Natural killer cell (primary cell): ENCODE measurements at regions of chrX and their contacts with region 1.

Region 1: DNA sequence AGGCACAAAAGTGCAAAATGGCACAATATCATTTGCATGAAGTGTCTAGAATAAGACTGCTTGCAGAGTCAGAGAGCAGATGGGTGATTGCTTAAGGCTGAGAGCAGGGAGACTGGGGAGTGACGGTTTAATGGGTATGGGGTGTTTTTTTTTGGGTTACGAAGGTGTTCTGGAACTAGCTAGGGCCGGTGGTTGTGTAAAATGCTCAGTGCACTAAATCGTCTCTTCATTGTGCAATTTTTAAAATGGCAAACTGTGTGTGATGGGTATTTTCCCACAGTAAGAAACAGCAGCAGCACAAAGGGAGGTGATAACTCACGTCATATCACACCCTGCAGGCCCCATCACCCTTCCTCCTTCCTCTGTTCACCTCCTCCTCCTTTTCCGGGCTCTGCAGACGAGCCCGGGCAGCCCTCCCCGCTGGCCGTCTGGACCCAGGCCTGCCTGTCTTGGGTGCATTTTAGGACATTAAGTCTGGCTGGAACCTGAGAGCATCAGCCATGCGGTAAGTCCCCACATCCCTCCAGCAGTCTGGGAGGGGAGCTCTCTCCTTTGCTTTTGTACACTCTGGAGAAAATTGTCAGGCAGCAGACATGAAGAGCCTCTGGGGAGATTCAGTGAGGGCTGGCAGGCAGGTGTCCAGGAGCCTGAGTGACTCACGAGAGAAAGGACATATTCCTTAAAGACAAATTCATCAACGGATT is 42.7 kb downstream of the ASMT start:
- DNase-seq: peak; percentile 73 to 90
- ATAC-seq: peak; percentile 67 to 97 (median 67)
- H3K4me3 ChIP-seq: peak overlapping the region; percentile 55
- H3K4me3 Mint-ChIP-seq: peak overlapping the region; percentile 82
- H3K27ac ChIP-seq: peak overlapping the region; percentile 94
- H3K27ac Mint-ChIP-seq: peak overlapping the region; percentile 97 to 98
- H3K4me1 ChIP-seq: peaks cover 52% of the 10 kb centered on the region
- H3K4me1 Mint-ChIP-seq: peaks cover 34 to 43% of the 10 kb centered on the region in 2 donors
- H3K27me3 ChIP-seq: no peaks in the 10 kb centered on the region
- H3K27me3 Mint-ChIP-seq: no peaks in the 10 kb centered on the region
- CTCF ChIP-seq: no peak

Region 2: GRCh38 chrX:1391707-1392375 is 265.7 kb before region 1 on chrX and contains the start of gene SLC25A6:
- intact Hi-C with region 1: loop called (anchors 5 kb)
- DNase-seq: peak; percentile 99 to 100
- ATAC-seq: peak; percentile 93 to 98 (median 93)
- H3K4me3 ChIP-seq: peak within 1 kb of the TSS; percentile 99
- H3K4me3 Mint-ChIP-seq: peak within 1 kb of the TSS; percentile 92
- H3K27ac ChIP-seq: peak within 1 kb of the TSS; percentile 95
- H3K27ac Mint-ChIP-seq: peak within 1 kb of the TSS; percentile 85 to 94
- H3K4me1 ChIP-seq: peaks cover 24% of the 10 kb centered on the region
- H3K4me1 Mint-ChIP-seq: peaks cover 37 to 61% of the 10 kb centered on the region in 2 donors
- H3K27me3 ChIP-seq: no peaks in the 10 kb centered on the region
- H3K27me3 Mint-ChIP-seq: no peaks in the 10 kb centered on the region
- CTCF ChIP-seq: no peak
- total RNA-seq, gene SLC25A6: 157 to 197 (median 178) TPM

Region 3: DNA sequence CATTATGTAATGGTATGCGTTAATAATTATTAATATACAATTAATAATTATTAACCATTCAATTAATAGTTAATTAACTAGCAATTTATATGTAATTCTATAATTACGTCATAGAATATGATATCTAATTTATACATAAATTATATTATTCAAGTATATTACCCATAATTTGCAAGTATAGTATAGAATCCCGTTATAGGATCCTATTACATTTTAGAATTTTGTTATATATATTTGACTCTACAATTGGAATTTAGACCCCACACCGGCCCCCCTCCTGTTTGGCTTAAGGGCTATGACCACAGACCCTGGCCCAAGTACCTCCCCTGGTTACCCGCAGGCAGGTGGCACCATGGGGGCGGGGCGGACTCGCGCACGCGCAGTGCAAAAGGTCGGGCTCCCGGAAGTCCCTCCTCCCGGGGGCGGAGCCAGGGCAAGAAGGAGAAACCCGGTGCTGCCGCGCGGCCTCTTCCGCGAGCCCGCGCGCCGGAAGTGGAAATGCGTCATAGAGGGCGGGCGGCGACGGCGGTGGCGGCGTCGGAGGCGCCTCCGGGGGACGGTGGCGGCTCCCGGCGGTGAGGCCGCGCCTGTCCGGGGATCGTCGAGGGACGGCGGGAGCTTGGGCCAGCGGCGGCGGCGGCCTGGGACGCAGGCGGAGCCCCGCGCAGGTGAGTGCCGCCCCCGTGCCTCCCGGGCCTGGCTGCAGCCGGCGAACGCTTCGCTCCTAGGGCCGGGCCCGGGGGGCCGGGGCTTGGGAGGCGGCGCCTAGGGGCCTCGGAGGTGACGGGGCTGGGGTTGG is 66.2 kb before region 1 on chrX and contains the start of gene AKAP17A:
- intact Hi-C with region 1: loop called (anchors 5 kb)
- DNase-seq: peak; percentile 97 to 99
- ATAC-seq: peak; percentile 93 to 94 (median 94)
- H3K4me3 ChIP-seq: peak within 1 kb of the TSS; percentile 91
- H3K4me3 Mint-ChIP-seq: peak within 1 kb of the TSS; percentile 92
- H3K27ac ChIP-seq: peak within 1 kb of the TSS; percentile 85
- H3K27ac Mint-ChIP-seq: peak within 1 kb of the TSS; percentile 87 to 93
- H3K4me1 ChIP-seq: peaks cover 29% of the 10 kb centered on the region
- H3K4me1 Mint-ChIP-seq: peaks cover 20 to 35% of the 10 kb centered on the region in 2 donors
- H3K27me3 ChIP-seq: no peaks in the 10 kb centered on the region
- H3K27me3 Mint-ChIP-seq: no peaks in the 10 kb centered on the region
- CTCF ChIP-seq: peak; percentile 9
- total RNA-seq, gene AKAP17A: 120 to 141 (median 121) TPM

Region 4: GRCh38 chrX:2500267-2501075 is 843.0 kb after region 1 on chrX and contains the starts of genes DHRSX and ZBED1:
- intact Hi-C with region 1: loop called (anchors 5 kb)
- DNase-seq: peak; percentile 65 to 66
- ATAC-seq: peak; percentile 78 to 86 (median 84)
- H3K4me3 ChIP-seq: peak within 1 kb of the TSS; percentile 75
- H3K4me3 Mint-ChIP-seq: peak within 1 kb of the TSS; percentile 84
- H3K27ac ChIP-seq: peak within 1 kb of the TSS; percentile 81
- H3K27ac Mint-ChIP-seq: peak within 1 kb of the TSS; percentile 80 to 92
- H3K4me1 ChIP-seq: peaks cover 30% of the 10 kb centered on the region
- H3K4me1 Mint-ChIP-seq: peaks cover 16 to 36% of the 10 kb centered on the region in 2 donors
- H3K27me3 ChIP-seq: no peaks in the 10 kb centered on the region
- H3K27me3 Mint-ChIP-seq: no peaks in the 10 kb centered on the region
- CTCF ChIP-seq: no peak
- total RNA-seq, gene DHRSX: 21.5 to 26.1 (median 22.9) TPM
- total RNA-seq, gene ZBED1: 30.5 to 36.3 (median 33.8) TPM

Region 5: GRCh38 chrX:2627272-2627867 is 969.9 kb after region 1 on chrX:
- intact Hi-C with region 1: loop called (anchors 1 kb)
- DNase-seq: peak in 1 of 2 donors; percentile 70
- ATAC-seq: peak; percentile 43 to 57 (median 49)
- H3K4me3 ChIP-seq: no peak overlapping the region
- H3K4me3 Mint-ChIP-seq: no peak overlapping the region
- H3K27ac ChIP-seq: no peak overlapping the region
- H3K27ac Mint-ChIP-seq: peak overlapping the region; percentile 95 to 96
- H3K4me1 ChIP-seq: peaks cover 10% of the 10 kb centered on the region
- H3K4me1 Mint-ChIP-seq: peaks cover 36 to 41% of the 10 kb centered on the region in 2 donors
- H3K27me3 ChIP-seq: no peaks in the 10 kb centered on the region
- H3K27me3 Mint-ChIP-seq: no peaks in the 10 kb centered on the region
- CTCF ChIP-seq: no peak